CD4-positive, alpha-beta memory T cell (primary cell): ENCODE measurements at regions of chr9 and their contacts with region 1.

Region 1: GRCh38 chr9:95494416-95495371 is 22.1 kb downstream of the PTCH1 start:
- DNase-seq: peak; percentile 87 to 94 (median 90)
- H3K4me3 ChIP-seq: peak overlapping the region in 1 of 2 donors; percentile 48
- H3K4me3 Mint-ChIP-seq: peak overlapping the region; percentile 82 to 93 (median 90)
- H3K27ac ChIP-seq: peak overlapping the region; percentile 64
- H3K27ac Mint-ChIP-seq: peak overlapping the region; percentile 88 to 100 (median 98)
- H3K4me1 ChIP-seq: peaks cover 65% of the 10 kb centered on the region
- H3K4me1 Mint-ChIP-seq: peaks cover 28 to 86% (median 59%) of the 10 kb centered on the region in 4 donors
- H3K27me3 ChIP-seq: no peaks in the 10 kb centered on the region
- H3K27me3 Mint-ChIP-seq: peaks cover 1 to 4% of the 10 kb centered on the region in 2 donors

Region 2: DNA sequence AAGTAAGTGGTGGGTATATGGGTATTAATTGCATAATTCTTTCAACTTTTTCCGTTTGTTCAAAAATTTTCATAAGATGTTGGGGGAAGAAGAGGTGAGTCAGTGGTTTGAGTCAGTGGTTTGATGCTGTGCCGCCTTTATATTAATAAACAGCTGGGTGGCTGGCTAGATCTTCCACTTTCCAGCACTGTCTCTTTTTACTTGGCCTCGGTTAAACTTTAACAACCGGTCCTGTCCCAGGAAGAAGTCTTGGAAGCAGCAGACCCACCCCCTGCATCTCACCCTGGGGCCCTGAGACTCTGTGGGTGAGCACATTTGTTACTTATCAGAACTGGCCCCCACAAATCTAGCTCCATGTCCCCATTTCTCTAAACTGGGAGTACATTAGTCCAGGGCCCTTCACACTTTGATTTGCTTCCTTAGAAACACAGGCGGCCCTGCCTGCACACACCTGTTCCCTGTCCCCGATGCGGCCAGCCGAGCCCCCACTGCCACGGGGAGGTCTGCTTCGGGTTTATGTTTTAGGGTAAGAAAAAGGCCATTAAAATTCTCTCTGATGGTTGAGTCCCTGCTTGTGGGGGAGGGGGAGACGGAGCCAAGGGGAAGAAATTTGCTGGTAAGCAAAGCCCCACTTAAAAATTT is 68.7 kb before region 1 on chr9:
- CTCF ChIA-PET with region 1: no interaction called
- POLR2A ChIA-PET with region 1: no interaction called
- intact Hi-C with region 1: loop called (anchors 10 kb)
- DNase-seq: peak in 1 of 5 donors; percentile 5
- H3K4me3 ChIP-seq: peak overlapping the region in 1 of 2 donors; percentile 27
- H3K4me3 Mint-ChIP-seq: peak overlapping the region; percentile 46 to 84 (median 68)
- H3K27ac ChIP-seq: no peak overlapping the region
- H3K27ac Mint-ChIP-seq: peak overlapping the region in 3 of 7 donors; percentile 42 to 66 (median 62)
- H3K4me1 ChIP-seq: peaks cover 11% of the 10 kb centered on the region
- H3K4me1 Mint-ChIP-seq: peaks cover 9 to 15% (median 13%) of the 10 kb centered on the region in 4 donors
- H3K27me3 ChIP-seq: no peaks in the 10 kb centered on the region
- H3K27me3 Mint-ChIP-seq: no peaks in the 10 kb centered on the region

Region 3: DNA sequence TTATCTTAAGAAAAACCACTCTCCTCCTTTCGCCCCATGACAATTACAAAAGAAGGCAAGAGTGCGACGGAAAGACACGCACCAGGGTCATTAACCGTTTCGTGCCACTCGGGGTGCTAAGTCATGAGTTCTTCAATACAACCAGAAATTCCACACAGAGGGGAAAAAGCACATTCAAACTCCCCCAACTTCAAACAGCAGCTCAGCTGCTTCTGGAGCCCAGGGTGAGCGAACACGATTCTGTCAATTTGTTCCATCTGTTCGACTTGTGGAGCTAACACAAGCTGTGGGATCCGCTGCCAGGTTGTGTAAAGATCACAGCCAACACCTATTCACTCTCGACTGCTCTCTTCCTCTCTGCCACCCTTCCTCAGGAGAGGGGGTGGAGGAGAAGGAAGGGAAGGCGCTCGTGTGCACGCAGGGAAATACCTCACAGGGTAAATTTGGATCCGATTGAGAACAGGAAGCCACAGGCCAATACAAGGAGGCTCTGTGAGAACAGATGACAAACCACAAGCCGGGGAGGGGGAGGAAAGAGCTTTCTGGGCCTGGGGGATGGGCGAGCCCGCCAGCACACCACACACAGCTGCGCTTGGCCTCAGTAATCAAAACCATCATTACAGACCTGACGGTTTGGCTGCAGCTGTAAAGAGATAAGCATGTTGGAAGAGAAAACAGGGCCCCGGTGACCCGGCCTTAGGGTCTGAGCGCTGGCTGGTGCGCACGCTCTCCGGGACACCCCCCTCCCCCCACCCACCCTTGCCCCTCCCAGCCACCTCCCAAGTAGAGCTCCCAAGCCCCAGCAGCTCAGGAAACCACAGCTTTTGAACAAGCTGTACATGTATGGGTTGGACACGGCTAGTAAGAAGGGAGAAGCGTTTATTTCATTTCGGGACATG is 32.2 kb before region 1 on chr9:
- CTCF ChIA-PET with region 1: no interaction called
- POLR2A ChIA-PET with region 1: interaction called, 13 read pairs
- intact Hi-C with region 1: loop called (anchors 1 kb)
- DNase-seq: peak; percentile 87 to 91 (median 88)
- H3K4me3 ChIP-seq: peak overlapping the region; percentile 5 to 40
- H3K4me3 Mint-ChIP-seq: peak overlapping the region; percentile 83 to 90 (median 88)
- H3K27ac ChIP-seq: peak overlapping the region; percentile 22
- H3K27ac Mint-ChIP-seq: peak overlapping the region; percentile 74 to 96 (median 87)
- H3K4me1 ChIP-seq: peaks cover 26% of the 10 kb centered on the region
- H3K4me1 Mint-ChIP-seq: peaks cover 27 to 60% (median 42%) of the 10 kb centered on the region in 4 donors
- H3K27me3 ChIP-seq: no peaks in the 10 kb centered on the region
- H3K27me3 Mint-ChIP-seq: peaks cover 0 to 2% of the 10 kb centered on the region in 2 donors

Region 4: GRCh38 chr9:95522871-95523370 is 28.2 kb after region 1 on chr9:
- CTCF ChIA-PET with region 1: no interaction called
- POLR2A ChIA-PET with region 1: no interaction called
- intact Hi-C with region 1: no loop called
- DNase-seq: no peak
- H3K4me3 ChIP-seq: no peak overlapping the region
- H3K4me3 Mint-ChIP-seq: no peak overlapping the region
- H3K27ac ChIP-seq: no peak overlapping the region
- H3K27ac Mint-ChIP-seq: no peak overlapping the region
- H3K4me1 ChIP-seq: no peaks in the 10 kb centered on the region
- H3K4me1 Mint-ChIP-seq: no peaks in the 10 kb centered on the region
- H3K27me3 ChIP-seq: peaks cover 6% of the 10 kb centered on the region
- H3K27me3 Mint-ChIP-seq: peaks cover 9 to 20% of the 10 kb centered on the region in 2 donors

Region 5: GRCh38 chr9:95588724-95589652 is 94.3 kb after region 1 on chr9:
- CTCF ChIA-PET with region 1: no interaction called
- POLR2A ChIA-PET with region 1: no interaction called
- intact Hi-C with region 1: no loop called
- DNase-seq: no peak
- H3K4me3 ChIP-seq: no peak overlapping the region
- H3K4me3 Mint-ChIP-seq: no peak overlapping the region
- H3K27ac ChIP-seq: no peak overlapping the region
- H3K27ac Mint-ChIP-seq: no peak overlapping the region
- H3K4me1 ChIP-seq: no peaks in the 10 kb centered on the region
- H3K4me1 Mint-ChIP-seq: peaks cover 0 to 2% (median 0%) of the 10 kb centered on the region in 4 donors
- H3K27me3 ChIP-seq: no peaks in the 10 kb centered on the region
- H3K27me3 Mint-ChIP-seq: peaks cover 4% of the 10 kb centered on the region in 2 donors